Activated T-helper 2 cell treated with anti-CD3 and anti-CD28 coated beads, Interferon-gamma antibody, Interleukin-2, Interleukin-4, amounts not matched to agents 10 μg/mL and 5 μg/mL and 100 μg/mL, durations not matched to agents 14 hours and 24 hours and 36 hours (primary cell): ENCODE measurements at regions of chr7 and their contacts with region 1.

Region 1: GRCh38 chr7:113404245-113404644 is 285.9 kb upstream of the SMIM30 start:
- DNase-seq: no peak
- H3K4me3 Mint-ChIP-seq: no peak overlapping the region
- H3K27ac Mint-ChIP-seq: no peak overlapping the region
- H3K4me1 Mint-ChIP-seq: no peaks in the 10 kb centered on the region
- H3K27me3 Mint-ChIP-seq: no peaks in the 10 kb centered on the region

Region 2: DNA sequence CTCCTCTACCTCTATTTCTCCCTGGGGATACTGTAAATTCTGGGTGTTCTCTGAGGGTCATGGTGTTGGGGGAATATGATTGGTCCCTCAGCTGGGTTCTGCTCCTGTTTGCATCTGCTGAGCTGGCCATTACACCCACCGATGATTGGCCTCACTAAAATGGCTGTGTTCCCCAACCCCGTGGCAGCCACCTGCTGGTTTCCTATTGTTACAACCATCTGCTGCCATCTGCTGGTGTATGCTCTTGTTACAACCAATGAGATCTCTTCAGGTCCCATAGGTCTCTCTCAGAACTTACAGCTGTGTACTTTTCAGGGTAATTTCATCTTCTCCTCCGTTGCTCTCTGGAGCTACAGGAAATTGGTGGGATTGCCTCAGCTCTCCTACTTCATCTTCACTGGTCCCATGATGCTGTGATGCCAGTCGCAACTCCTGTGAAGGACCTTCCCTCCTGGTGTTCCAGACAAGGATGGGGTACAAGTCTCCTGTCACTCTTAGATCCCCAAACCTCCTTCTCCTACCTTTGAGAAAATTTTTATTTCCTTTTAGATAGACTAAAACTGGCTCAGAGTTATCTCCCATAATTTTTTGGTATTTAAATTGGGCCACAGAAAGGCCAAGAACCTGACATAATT is 17.6 kb after region 1 on chr7:
- intact Hi-C with region 1: no loop called
- DNase-seq: peak; percentile 63
- H3K4me3 Mint-ChIP-seq: no peak overlapping the region
- H3K27ac Mint-ChIP-seq: no peak overlapping the region
- H3K4me1 Mint-ChIP-seq: peaks cover 2% of the 10 kb centered on the region
- H3K27me3 Mint-ChIP-seq: no peaks in the 10 kb centered on the region

Region 3: DNA sequence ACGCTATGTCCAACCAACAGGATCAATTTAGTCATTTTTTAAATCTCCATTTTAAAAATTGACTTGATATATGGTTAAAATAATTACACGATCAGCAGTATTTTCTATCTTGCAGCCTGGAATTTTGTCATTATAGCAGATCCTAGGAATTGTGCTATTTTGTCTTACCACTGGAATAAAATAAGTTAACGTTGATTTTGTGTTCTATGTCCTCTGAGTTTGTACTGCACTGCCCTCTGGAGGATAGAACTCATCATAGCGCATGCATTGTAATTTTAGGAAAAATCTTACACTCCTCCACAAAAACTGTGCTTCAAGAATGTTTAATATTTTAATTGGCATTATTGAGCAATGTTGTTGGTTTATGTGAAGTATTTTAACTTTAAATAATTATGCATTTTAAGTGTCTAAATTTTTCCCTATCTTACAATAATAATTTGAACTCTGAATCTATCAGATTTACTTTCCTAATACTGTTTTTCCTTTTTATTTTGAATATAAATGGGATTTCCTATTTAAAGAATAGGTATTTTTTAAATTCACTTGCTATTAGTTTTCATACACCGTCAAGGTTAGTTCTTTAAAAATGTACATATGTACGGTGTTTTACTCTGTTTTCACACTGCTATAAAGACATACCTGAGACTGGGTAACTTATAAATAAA is 294.4 kb after region 1 on chr7:
- intact Hi-C with region 1: loop called (anchors 2 kb)
- DNase-seq: no peak
- H3K4me3 Mint-ChIP-seq: no peak overlapping the region
- H3K27ac Mint-ChIP-seq: no peak overlapping the region
- H3K4me1 Mint-ChIP-seq: no peaks in the 10 kb centered on the region
- H3K27me3 Mint-ChIP-seq: no peaks in the 10 kb centered on the region